Psoas muscle (tissue), 8 donors: ENCODE measurements at regions of chr2 and their contacts with region 1.

Region 1: GRCh38 chr2:9555297-9556141 is at the start of gene ADAM17:
- DNase-seq: peak; percentile 98
- ATAC-seq: peak; percentile 93 to 97 (median 94)
- H3K4me3 ChIP-seq: peak within 1 kb of the TSS; percentile 93
- H3K27ac ChIP-seq: peak within 1 kb of the TSS; percentile 96
- H3K4me1 ChIP-seq: peaks cover 47% of the 10 kb centered on the region
- H3K27me3 ChIP-seq: no peaks in the 10 kb centered on the region
- CTCF ChIP-seq: peak; percentile 25
- total RNA-seq, gene ADAM17: 12.9 to 36.3 (median 16.1) TPM

Region 2: GRCh38 chr2:9497017-9497416 is 58.5 kb before region 1 on chr2:
- intact Hi-C with region 1: no loop called
- DNase-seq: no peak
- ATAC-seq: peak in 1 of 4 donors; percentile 17
- H3K4me3 ChIP-seq: no peak overlapping the region
- H3K27ac ChIP-seq: no peak overlapping the region
- H3K4me1 ChIP-seq: peaks cover 5% of the 10 kb centered on the region
- H3K27me3 ChIP-seq: no peaks in the 10 kb centered on the region
- CTCF ChIP-seq: no peak

Region 3: GRCh38 chr2:9693211-9693520 is 137.6 kb after region 1 on chr2:
- intact Hi-C with region 1: loop called in 1 of 2 experiments (anchors 2 kb)
- DNase-seq: peak; percentile 83 to 92
- ATAC-seq: peak; percentile 94 to 98 (median 96)
- H3K4me3 ChIP-seq: peak overlapping the region; percentile 54
- H3K27ac ChIP-seq: peak overlapping the region; percentile 96
- H3K4me1 ChIP-seq: peaks cover 19% of the 10 kb centered on the region
- H3K27me3 ChIP-seq: no peaks in the 10 kb centered on the region
- CTCF ChIP-seq: no peak